ENCODE measurements at regions of chr1 and their contacts with region 1.

Region 1: GRCh38 chr1:180502360-180503273 is at the start of gene ACBD6:
- DNase-seq: peak; percentile 71 to 91 (median 82)
- H3K4me3 ChIP-seq: peak within 1 kb of the TSS; percentile 66 to 100 (median 91)
- H3K27ac ChIP-seq: peak within 1 kb of the TSS; percentile 73 to 98 (median 93)
- H3K27me3 ChIP-seq: no peaks in the 10 kb centered on the region
- CTCF ChIP-seq: peak in 37 of 56 donors; percentile 6 to 50 (median 26)
- total RNA-seq, gene ACBD6: 31.2 to 64.0 (median 43.3) TPM

Region 2: GRCh38 chr1:180542838-180543145 is 40.2 kb after region 1 on chr1:
- intact Hi-C with region 1: no loop called
- DNase-seq: no peak
- H3K4me3 ChIP-seq: no peak overlapping the region
- H3K27ac ChIP-seq: peak overlapping the region in 16 of 59 donors; percentile 6 to 55 (median 34)
- H3K27me3 ChIP-seq: no peaks in the 10 kb centered on the region
- CTCF ChIP-seq: no peak

Region 3: GRCh38 chr1:181152892-181153633 is 650.4 kb after region 1 on chr1:
- intact Hi-C with region 1: loop called (anchors 10 kb)
- DNase-seq: peak in 9 of 10 donors; percentile 56 to 84 (median 76)
- H3K4me3 ChIP-seq: peak overlapping the region in 10 of 59 donors; percentile 2 to 33 (median 24)
- H3K27ac ChIP-seq: peak overlapping the region in 57 of 59 donors; percentile 27 to 92 (median 78)
- H3K27me3 ChIP-seq: no peaks in the 10 kb centered on the region
- CTCF ChIP-seq: peak in 12 of 56 donors; percentile 8 to 35 (median 21)